ENCODE measurements at regions of chr1 and their contacts with region 1.

Region 1: GRCh38 chr1:8097077-8097799 is 71.1 kb upstream of the ERRFI1 start:
- DNase-seq: peak; percentile 69
- H3K4me3 Mint-ChIP-seq: peak overlapping the region; percentile 78
- H3K27ac Mint-ChIP-seq: peak overlapping the region; percentile 93
- H3K4me1 Mint-ChIP-seq: peaks cover 39% of the 10 kb centered on the region
- H3K27me3 Mint-ChIP-seq: peaks cover 6% of the 10 kb centered on the region

Region 2: GRCh38 chr1:7942214-7942921 is 154.9 kb before region 1 on chr1:
- intact Hi-C with region 1: loop called (anchors 5 kb)
- DNase-seq: peak; percentile 76
- H3K4me3 Mint-ChIP-seq: peak overlapping the region; percentile 78
- H3K27ac Mint-ChIP-seq: peak overlapping the region; percentile 65
- H3K4me1 Mint-ChIP-seq: peaks cover 46% of the 10 kb centered on the region
- H3K27me3 Mint-ChIP-seq: peaks cover 19% of the 10 kb centered on the region

Region 3: GRCh38 chr1:8026153-8026975 is 70.9 kb before region 1 on chr1 and contains the start of gene ERRFI1:
- intact Hi-C with region 1: no loop called
- DNase-seq: peak; percentile 97
- H3K4me3 Mint-ChIP-seq: peak within 1 kb of the TSS; percentile 89
- H3K27ac Mint-ChIP-seq: peak within 1 kb of the TSS; percentile 76
- H3K4me1 Mint-ChIP-seq: peaks cover 10% of the 10 kb centered on the region
- H3K27me3 Mint-ChIP-seq: peaks cover 63% of the 10 kb centered on the region
- total RNA-seq, gene ERRFI1: 2.0 TPM in 2 replicates

Region 4: DNA sequence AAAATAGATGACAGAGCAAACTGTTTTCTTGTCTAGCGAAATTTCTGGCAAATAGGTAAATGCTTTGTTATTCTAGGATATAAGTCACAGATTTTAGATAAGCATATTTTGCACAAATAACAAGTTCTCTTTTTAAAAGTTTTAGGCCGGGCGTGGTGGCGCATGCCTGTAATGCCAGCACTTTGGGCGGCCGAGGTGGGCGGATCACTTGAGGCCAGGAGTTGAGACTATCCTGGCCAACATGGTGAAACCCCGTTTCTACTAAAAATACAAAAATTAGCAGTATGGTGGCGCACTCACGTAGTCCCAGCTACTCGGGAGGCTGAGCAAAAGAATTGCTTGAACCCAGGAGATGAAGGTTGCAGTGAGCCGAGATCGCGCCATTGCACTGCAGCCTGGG is 50.8 kb before region 1 on chr1:
- intact Hi-C with region 1: loop called (anchors 1 kb)
- DNase-seq: no peak
- H3K4me3 Mint-ChIP-seq: no peak overlapping the region
- H3K27ac Mint-ChIP-seq: no peak overlapping the region
- H3K4me1 Mint-ChIP-seq: peaks cover 4% of the 10 kb centered on the region
- H3K27me3 Mint-ChIP-seq: peaks cover 2% of the 10 kb centered on the region

Region 5: DNA sequence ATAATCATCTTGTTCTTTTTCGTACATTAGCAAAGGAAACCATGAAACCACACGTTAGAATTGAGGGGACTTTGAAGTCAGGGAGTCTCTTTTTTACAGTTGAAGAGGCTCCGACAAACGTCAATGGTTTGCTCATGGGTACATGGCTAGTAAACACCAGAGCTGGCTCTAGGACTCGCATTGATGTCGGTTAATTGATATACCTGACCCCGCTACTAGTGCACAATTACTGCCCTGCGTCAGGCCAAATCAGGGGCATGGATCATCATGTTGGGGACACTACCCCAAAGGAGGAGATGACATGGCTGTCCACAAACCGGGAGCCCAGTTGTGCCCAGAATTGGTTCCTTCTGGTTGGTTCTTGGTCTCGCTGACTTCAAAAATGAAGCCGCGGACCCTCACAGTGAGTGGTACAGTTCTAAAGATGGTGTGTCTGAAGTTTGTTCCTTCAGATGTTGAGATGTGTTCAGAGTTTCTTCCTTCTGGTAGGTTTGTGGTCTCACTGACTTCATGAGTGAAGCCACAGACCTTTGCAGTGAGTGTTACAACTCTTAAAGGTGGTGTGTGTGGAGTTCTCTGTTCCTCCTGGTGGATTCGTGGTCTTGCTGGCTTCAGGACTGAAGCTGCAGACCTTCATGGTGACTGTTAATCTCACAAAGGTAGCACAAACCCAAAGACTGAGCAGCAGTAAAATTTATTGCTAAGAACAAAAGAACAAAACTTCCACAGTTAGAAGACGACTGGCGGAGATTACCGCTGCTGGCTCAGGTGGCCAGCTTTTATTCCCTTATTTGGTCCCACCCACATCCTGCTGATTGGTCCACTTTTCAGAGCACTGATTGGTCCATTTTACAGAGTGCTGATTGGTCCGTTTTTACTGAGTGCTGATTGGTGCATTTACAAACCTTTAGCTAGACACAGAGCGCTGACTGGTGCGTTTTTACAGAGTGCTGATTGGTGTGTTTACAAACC is 55.8 kb after region 1 on chr1:
- intact Hi-C with region 1: loop called (anchors 1 kb)
- DNase-seq: peak; percentile 84
- H3K4me3 Mint-ChIP-seq: peak overlapping the region; percentile 78
- H3K27ac Mint-ChIP-seq: peak overlapping the region; percentile 94
- H3K4me1 Mint-ChIP-seq: peaks cover 35% of the 10 kb centered on the region
- H3K27me3 Mint-ChIP-seq: peaks cover 18% of the 10 kb centered on the region

Region 6: DNA sequence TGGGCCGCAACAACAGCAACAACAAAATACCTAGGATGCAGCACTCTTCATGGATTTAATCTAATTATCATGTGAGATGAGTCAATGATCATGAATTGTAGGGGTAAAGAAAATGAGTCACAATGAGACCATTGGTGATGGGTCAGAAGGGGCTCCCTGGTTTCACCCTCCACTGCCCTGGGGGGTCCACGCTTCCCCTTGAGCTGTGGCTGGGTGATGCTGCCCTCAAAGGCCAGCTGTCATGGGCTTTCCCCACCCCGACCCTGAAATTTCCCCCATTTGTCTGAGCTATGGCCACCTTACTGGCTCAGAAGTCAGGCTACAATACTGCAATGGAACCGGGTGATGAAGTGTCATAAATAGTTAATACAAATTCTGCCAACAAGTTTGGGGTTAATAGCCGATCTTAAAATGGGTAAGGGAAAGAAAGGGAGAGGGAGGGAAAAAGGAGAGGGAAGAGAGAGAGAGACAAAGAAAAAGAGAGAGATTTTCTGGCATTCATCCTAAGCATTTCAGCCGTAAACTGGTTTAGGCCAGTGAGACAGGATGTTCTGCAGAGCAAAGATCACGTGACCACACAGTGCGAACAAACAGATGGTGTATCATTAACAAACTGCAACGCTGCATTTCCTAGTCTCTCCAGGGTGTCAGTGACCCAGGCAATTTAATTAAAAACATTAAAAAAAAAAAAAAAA is 72.3 kb after region 1 on chr1:
- intact Hi-C with region 1: loop called (anchors 5 kb)
- DNase-seq: peak; percentile 86
- H3K4me3 Mint-ChIP-seq: peak overlapping the region; percentile 48
- H3K27ac Mint-ChIP-seq: peak overlapping the region; percentile 87
- H3K4me1 Mint-ChIP-seq: peaks cover 24% of the 10 kb centered on the region
- H3K27me3 Mint-ChIP-seq: no peaks in the 10 kb centered on the region

Region 7: GRCh38 chr1:8182034-8182761 is 85.0 kb after region 1 on chr1:
- intact Hi-C with region 1: loop called (anchors 1 kb)
- DNase-seq: peak; percentile 83
- H3K4me3 Mint-ChIP-seq: peak overlapping the region; percentile 50
- H3K27ac Mint-ChIP-seq: peak overlapping the region; percentile 82
- H3K4me1 Mint-ChIP-seq: peaks cover 18% of the 10 kb centered on the region
- H3K27me3 Mint-ChIP-seq: peaks cover 3% of the 10 kb centered on the region

Region 8: GRCh38 chr1:8238851-8239305 is 141.6 kb after region 1 on chr1:
- intact Hi-C with region 1: no loop called
- DNase-seq: no peak
- H3K4me3 Mint-ChIP-seq: no peak overlapping the region
- H3K27ac Mint-ChIP-seq: no peak overlapping the region
- H3K4me1 Mint-ChIP-seq: peaks cover 6% of the 10 kb centered on the region
- H3K27me3 Mint-ChIP-seq: peaks cover 4% of the 10 kb centered on the region

Region 9: GRCh38 chr1:8396786-8397406 is 299.7 kb after region 1 on chr1:
- intact Hi-C with region 1: loop called (anchors 2 kb)
- DNase-seq: peak; percentile 71
- H3K4me3 Mint-ChIP-seq: peak overlapping the region; percentile 32
- H3K27ac Mint-ChIP-seq: peak overlapping the region; percentile 84
- H3K4me1 Mint-ChIP-seq: peaks cover 53% of the 10 kb centered on the region
- H3K27me3 Mint-ChIP-seq: no peaks in the 10 kb centered on the region

Measured in activated CD4-positive, alpha-beta T cell treated with anti-CD3 and anti-CD28 coated beads, Interleukin-2, amount 10 ng/mL, durations not matched to agents 24 days and 14 days (primary cell).